ENCODE measurements at regions of chr22 and their contacts with region 1.

Region 1: DNA sequence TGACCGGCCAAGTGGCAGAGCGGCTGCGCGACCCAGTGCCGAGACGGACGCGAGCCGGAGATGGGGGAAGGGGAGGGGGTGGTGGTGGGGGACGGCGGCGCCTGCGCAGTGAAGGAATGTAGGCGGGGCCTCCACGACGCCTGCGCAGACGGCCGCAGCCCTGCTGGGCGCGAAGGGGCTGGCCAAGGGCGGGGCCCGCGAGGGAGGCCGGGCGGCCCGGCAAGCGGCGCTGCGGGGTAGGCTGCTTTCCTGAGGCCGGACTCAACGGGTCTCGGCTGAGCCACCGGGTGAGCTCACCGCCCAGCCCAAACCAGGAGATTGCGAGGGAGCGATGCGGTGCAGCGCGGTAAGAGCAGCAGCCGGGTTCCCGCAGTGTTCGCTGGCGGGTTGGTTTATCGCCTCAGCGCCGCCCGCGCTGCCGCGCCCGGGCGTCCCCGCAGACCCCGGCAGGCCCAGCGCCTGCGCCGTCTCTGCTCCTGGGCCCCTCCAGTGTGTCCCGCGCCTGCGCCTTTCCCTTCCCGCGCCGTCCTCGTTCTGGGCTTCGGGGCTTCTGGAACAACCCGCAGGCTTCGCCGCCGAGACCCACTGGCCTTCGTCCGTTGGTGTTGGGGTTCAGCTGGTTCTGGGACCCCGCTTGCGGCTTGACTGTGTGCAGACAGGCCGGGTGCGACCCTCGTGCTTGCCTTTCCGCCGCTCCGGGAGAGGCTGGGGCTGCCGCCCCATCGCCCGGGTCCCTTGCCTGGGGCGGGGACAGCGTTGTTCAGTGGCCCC is at the start of gene SPECC1L:
- DNase-seq: peak; percentile 93
- H3K4me3 Mint-ChIP-seq: peak within 1 kb of the TSS; percentile 74
- H3K27ac Mint-ChIP-seq: peak within 1 kb of the TSS; percentile 80
- H3K4me1 Mint-ChIP-seq: peaks cover 36% of the 10 kb centered on the region
- H3K27me3 Mint-ChIP-seq: no peaks in the 10 kb centered on the region
- total RNA-seq, gene SPECC1L: 33.2 to 37.9 TPM

Region 2: DNA sequence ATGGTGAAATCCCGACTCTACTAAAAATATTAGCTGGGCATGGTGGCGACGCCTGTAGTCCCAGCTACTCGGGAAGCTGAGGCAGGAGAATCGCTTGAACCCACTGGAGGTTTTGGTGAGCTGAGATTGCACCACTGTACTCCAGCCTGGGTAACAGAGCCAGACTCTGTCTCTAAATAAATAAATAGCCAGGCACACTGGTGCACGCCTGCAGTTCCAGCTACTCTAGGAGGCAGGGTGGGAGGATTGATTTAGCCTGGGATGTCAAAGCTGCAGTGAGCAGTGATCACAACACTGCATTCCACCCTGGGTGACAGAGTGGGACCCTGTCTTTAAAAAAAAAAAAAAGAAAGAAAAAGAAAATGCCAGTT is 72.2 kb before region 1 on chr22:
- CTCF ChIA-PET with region 1: no interaction called
- POLR2A ChIA-PET with region 1: interaction called, 11 read pairs
- DNase-seq: no peak
- H3K4me3 Mint-ChIP-seq: no peak overlapping the region
- H3K27ac Mint-ChIP-seq: peak overlapping the region; percentile 87
- H3K4me1 Mint-ChIP-seq: peaks cover 40% of the 10 kb centered on the region
- H3K27me3 Mint-ChIP-seq: peaks cover 8% of the 10 kb centered on the region

Region 3: GRCh38 chr22:24284747-24285203 is 14.0 kb after region 1 on chr22:
- CTCF ChIA-PET with region 1: interaction called, 3 read pairs
- POLR2A ChIA-PET with region 1: interaction called, 13 read pairs
- DNase-seq: no peak
- H3K4me3 Mint-ChIP-seq: no peak overlapping the region
- H3K27ac Mint-ChIP-seq: peak overlapping the region; percentile 8
- H3K4me1 Mint-ChIP-seq: peaks cover 45% of the 10 kb centered on the region
- H3K27me3 Mint-ChIP-seq: peaks cover 4% of the 10 kb centered on the region

Measured in activated CD4-positive, alpha-beta memory T cell treated with anti-CD3 and anti-CD28 coated beads, Interleukin-2, amount 10 ng/mL, durations not matched to agents 7 days and 5 days (primary cell).